Activated T-helper 2 cell treated with anti-CD3 and anti-CD28 coated beads, Interferon-gamma antibody, Interleukin-2, Interleukin-4, amounts not matched to agents 10 μg/mL and 5 μg/mL and 100 μg/mL, durations not matched to agents 14 hours and 24 hours and 36 hours (primary cell): ENCODE measurements at regions of chr1 and their contacts with region 1.

Region 1: DNA sequence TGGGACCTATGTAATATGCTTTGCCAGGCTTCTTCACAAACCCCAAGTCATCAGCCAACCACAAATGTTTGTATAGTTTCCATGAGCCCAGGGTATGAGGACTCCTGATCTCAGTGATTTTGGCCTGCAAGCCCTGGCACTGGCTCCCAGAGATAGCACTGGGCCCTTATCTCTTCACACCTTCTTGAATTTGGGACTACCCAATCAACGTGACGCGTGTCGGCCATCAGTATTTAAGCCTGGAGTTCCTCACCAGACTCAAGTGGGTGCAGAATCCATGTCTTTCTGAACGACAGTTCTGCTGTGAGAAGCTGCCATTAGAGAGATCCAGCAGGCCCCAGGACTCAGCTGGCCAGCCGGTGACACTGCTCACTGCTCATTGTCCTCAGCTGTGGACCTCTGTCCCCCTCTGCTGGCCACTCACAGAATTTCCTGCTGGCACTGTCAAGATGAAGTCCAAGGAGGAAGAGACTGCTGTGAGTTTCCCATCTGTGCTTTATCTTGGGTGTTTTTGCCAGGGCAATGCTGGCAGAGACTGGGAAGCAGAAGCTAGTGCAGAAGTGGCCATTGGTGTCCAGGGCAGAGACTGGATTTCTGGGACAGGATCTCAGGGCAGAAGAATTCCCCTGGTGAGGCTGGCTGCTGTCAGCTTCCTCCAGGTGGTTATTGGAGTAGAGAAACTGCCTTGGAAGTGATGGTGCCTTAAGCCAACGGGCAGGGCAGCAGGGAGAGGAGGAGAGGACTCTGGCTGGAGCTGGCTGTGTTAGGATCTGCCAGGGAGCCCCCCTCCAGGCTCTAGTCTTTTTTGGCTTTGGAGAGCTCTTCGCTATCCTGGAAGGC is 28.4 kb downstream of the TMCC2 start:
- DNase-seq: peak; percentile 74
- H3K4me3 Mint-ChIP-seq: no peak overlapping the region
- H3K27ac Mint-ChIP-seq: no peak overlapping the region
- H3K4me1 Mint-ChIP-seq: peaks cover 4% of the 10 kb centered on the region
- H3K27me3 Mint-ChIP-seq: no peaks in the 10 kb centered on the region

Region 2: DNA sequence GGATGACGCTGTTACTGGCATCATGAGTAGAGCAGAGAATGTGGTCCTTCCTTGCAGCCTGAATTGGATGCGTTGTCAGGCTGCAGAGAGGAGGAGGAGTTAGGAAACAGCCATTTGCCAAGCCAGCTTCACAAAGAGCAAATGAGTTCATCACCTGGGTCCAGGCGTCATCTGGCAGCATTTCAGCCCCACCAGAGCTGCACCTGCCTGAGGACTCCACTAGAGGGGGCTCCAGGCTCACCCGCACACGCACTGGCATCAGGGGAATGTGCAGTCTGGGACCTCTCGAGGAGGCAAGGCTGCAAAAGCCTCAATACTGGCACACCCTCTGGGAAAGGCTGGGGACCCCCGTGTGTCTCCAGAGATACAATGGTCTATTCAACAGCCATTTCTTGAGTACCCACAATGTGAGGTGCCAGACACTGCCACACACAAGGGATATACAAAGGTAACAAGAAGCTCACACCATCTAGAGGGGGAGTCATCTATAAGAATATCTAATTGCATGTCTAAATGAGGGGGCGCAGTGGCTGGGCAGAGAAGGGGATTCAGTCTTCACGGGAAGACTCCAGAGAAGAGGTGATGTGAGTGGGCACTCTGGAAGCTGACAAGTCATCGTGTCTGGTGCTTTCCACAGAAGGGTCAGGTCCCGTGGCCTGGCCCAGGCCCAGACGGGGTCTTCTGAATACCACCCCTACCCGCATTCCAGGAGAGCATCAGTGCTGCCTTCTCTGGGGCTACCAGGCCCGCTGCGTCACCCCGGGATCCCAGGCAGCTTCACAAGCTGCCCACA is 266.7 kb before region 1 on chr1:
- intact Hi-C with region 1: loop called (anchors 1 kb)
- DNase-seq: peak; percentile 33
- H3K4me3 Mint-ChIP-seq: no peak overlapping the region
- H3K27ac Mint-ChIP-seq: no peak overlapping the region
- H3K4me1 Mint-ChIP-seq: peaks cover 7% of the 10 kb centered on the region
- H3K27me3 Mint-ChIP-seq: peaks cover 6% of the 10 kb centered on the region

Region 3: DNA sequence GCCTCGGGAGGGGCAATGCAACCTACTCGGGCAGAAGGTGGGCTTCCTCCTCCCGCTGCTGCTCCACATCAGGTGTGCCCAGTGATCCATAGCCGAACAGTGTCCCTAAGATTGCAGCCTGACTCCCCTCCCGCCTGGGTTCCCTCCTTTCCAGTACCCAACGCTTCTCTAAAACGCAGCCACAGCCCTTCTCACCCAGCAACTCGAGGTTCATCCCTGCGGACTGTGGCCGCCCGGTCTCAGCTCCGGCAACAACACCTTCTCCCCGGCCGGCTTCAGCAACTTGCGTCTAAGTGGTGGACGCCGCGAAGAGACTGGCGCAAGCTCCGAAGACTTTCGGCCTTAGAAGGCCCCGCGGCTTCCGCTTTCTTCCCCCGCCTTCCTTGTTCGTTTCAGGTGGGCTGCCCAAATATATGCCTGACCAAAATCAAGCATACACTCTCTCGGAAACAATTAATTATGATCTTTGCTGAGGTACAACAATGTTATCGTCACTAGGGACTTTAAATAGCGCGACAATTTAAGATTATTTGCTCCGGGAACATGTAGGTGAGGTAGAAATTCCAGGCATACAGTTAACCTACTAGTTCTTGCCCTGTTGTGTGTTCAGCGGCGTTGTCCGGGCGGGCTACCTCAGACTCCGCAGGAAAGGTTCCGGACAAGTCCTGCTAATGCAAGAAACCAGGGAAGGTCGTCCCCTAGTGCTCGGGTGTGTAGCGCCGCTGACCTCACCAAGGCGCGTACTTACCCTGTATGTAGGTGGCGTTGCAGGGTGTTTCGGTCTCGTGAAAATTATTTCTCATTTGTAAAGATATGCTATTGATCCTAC is 134.3 kb before region 1 on chr1 and contains the start of gene RBBP5:
- intact Hi-C with region 1: loop called (anchors 1 kb)
- DNase-seq: peak; percentile 90
- H3K4me3 Mint-ChIP-seq: peak within 1 kb of the TSS; percentile 98
- H3K27ac Mint-ChIP-seq: peak within 1 kb of the TSS; percentile 99
- H3K4me1 Mint-ChIP-seq: peaks cover 35% of the 10 kb centered on the region
- H3K27me3 Mint-ChIP-seq: no peaks in the 10 kb centered on the region
- total RNA-seq, gene RBBP5: 19.2 and 21.6 TPM in 2 replicates

Region 4: DNA sequence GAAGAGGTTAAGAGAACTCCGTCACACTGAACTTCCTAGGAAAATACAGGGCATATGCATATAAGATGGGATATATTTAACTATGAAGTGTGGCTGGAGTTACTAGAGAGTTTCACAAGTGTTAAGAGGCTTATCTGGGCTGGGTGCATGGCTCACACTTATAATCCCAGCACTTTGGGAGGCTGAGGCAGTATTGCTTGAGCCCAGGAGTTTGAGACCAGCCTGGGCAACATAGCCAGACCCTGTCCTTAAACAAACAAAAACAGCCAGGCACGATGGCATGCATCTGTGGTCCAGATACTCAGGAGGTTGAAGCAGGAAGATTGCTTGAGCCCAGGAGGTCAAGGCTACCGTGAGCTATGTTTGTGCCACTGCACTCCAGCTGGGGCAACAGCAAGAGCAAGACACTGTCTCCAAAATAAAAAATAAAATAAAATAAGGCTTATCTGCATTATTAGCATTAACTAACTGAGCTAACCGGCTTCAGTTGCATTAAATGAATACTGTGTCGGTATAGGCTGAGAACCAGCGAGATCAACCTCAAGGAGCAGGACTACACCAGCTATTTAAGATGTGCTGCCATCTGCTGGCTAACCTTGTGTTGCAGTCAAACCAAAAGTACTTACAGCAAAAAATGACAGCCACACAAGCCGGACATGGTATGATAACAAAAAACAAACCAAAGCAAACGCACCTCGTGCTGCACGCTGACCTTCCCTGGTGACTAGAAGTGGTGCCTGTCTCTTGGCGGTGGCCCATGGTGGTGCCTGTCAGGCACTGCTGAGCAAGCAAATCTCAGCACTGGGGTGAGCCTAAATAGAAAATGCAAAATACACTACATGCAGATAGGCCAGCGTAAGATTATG is 114.7 kb before region 1 on chr1:
- intact Hi-C with region 1: loop called (anchors 5 kb)
- DNase-seq: peak; percentile 64
- H3K4me3 Mint-ChIP-seq: no peak overlapping the region
- H3K27ac Mint-ChIP-seq: no peak overlapping the region
- H3K4me1 Mint-ChIP-seq: peaks cover 6% of the 10 kb centered on the region
- H3K27me3 Mint-ChIP-seq: no peaks in the 10 kb centered on the region

Region 5: DNA sequence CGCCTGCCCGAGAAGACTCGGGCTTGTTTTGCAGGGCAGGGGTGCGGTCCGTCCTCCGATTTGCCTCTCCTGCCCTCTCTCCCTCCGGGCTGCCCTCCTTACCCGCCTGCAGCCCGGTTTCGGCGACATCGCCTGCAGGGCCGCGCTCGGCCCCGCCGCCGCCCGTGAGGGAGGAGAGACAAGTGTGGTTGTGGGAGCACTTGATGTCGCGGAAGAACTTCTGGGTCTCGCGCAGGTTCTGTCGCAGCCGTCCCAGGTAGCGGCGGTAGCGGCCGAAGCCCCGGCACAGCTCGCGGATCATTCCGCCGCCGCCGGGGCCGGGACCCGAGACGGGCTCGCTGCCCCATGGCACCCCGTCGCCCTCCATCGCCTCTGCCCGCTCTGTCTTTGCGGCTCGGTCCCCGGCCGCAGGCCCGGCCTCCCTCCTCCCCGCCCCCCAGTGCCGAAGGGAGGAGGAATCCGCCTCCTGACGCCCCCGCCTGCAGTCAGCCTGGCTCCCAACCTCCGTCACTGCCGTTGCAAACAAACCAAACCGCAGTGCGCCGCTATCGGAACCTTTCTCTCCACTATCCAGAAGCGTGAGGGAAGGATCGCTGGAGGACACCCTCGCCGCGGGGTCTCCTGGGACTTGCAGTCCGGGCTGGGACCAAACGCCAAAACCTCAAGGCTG is 44.9 kb before region 1 on chr1 and contains the start of gene DSTYK:
- intact Hi-C with region 1: loop called (anchors 5 kb)
- DNase-seq: peak; percentile 87
- H3K4me3 Mint-ChIP-seq: peak within 1 kb of the TSS; percentile 89
- H3K27ac Mint-ChIP-seq: peak within 1 kb of the TSS; percentile 95
- H3K4me1 Mint-ChIP-seq: peaks cover 36% of the 10 kb centered on the region
- H3K27me3 Mint-ChIP-seq: no peaks in the 10 kb centered on the region
- total RNA-seq, gene DSTYK: 27.3 and 28.6 TPM in 2 replicates

Region 6: GRCh38 chr1:205227584-205228006 is 28.6 kb before region 1 on chr1 and contains the start of gene TMCC2:
- intact Hi-C with region 1: loop called (anchors 1 kb)
- DNase-seq: peak; percentile 75
- H3K4me3 Mint-ChIP-seq: peak within 1 kb of the TSS; percentile 97
- H3K27ac Mint-ChIP-seq: peak within 1 kb of the TSS; percentile 85
- H3K4me1 Mint-ChIP-seq: peaks cover 39% of the 10 kb centered on the region
- H3K27me3 Mint-ChIP-seq: peaks cover 30% of the 10 kb centered on the region
- total RNA-seq, gene TMCC2: 13.4 and 14.0 TPM in 2 replicates